ENCODE measurements at regions of chr1 and their contacts with region 1.

Region 1: DNA sequence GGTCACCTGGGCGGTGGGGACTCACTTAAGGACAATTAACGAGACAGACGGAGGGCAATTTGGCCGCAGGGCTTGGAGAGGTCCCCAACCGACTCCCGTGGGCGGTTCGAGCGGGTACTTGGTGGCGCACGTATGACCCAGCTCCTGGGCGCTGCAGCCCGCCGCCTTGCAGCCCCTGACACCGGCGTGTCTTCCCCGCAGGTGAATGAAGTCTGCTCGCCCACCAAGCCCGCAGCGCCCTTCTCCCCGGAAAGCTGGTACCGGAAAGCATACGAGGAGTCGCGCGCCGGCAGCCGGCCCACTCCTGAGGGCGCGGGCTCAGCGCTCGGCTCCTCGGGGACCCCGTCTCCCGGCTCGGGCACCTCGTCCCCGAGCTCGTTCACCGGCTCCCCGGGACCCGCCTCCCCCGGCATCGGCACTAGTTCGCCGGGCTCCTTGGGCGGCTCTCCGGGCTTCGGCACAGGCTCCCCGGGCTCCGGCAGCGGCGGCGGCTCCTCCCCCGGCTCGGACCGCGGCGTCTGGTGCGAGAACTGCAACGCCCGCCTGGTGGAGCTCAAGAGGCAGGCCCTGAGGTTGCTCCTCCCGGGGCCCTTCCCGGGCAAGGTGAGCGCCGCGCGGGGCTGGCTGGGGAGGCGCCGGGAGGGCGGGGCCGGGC is 1.4 kb downstream of the KIF26B start:
- DNase-seq: peak; percentile 84
- ATAC-seq: peak; percentile 89
- H3K4me3 ChIP-seq: peak overlapping the region in 4 of 5 experiments; percentile 34 to 66 (median 57)
- H3K4me3 Mint-ChIP-seq: peak overlapping the region; percentile 89
- H3K27ac ChIP-seq: no peak overlapping the region
- H3K27ac Mint-ChIP-seq: no peak overlapping the region
- H3K4me1 ChIP-seq: peaks cover 33 to 35% of the 10 kb centered on the region in 2 donors
- H3K4me1 Mint-ChIP-seq: peaks cover 28% of the 10 kb centered on the region
- H3K27me3 ChIP-seq: peaks cover 0 to 71% (median 47%) of the 10 kb centered on the region in 4 experiments
- H3K27me3 Mint-ChIP-seq: peaks cover 64% of the 10 kb centered on the region
- CTCF ChIP-seq: peak; percentile 76

Region 2: DNA sequence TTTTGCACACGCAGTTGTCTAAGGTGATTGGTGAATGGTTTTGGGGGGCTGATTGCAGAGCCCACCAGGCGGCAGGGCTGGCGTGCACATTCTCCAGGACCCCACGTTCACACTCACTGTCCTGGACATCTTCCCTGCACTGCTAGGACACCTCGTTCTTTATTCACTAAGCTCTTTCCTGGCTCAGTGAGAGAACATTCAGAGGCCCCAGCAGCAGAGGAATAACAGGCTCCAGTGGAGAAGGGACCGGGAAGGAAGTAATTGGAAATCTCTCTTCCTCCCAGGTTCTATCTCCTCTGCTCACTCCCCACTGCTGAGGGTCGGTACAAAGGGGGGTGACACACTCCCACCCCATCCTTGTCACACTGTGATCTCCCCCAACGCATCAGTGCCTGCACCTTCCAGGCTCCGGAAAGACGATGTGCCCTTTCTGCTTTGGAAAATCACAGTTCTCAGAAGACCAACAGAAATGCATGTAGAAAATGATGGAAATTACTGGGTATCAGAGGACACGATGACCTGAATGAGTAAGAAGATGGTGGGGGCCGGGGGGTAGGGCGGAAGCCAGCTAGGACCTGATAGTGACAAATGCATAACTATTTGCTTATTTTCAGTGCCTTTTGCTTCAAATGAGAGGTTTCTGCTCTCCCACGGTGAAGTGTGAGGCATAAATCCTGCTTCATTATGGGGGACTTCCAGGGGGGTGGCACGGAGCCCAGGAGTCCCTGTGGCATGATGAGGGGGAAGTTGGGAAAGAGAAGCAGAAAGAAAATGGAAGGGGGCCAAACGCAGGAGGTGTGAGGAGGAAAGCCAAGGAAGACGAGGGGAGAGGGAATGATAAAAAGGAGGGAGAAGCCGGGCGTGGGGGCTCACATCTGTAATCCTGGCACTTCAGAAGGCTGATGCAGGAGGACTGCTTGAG is 26.6 kb before region 1 on chr1:
- CTCF ChIA-PET with region 1: no interaction called
- POLR2A ChIA-PET with region 1: no interaction called
- intact Hi-C with region 1: no loop called
- DNase-seq: no peak
- ATAC-seq: no peak
- H3K4me3 ChIP-seq: no peak overlapping the region
- H3K4me3 Mint-ChIP-seq: no peak overlapping the region
- H3K27ac ChIP-seq: no peak overlapping the region
- H3K27ac Mint-ChIP-seq: no peak overlapping the region
- H3K4me1 ChIP-seq: no peaks in the 10 kb centered on the region
- H3K4me1 Mint-ChIP-seq: no peaks in the 10 kb centered on the region
- H3K27me3 ChIP-seq: peaks cover 0 to 3% (median 0%) of the 10 kb centered on the region in 4 experiments
- H3K27me3 Mint-ChIP-seq: peaks cover 45% of the 10 kb centered on the region
- CTCF ChIP-seq: no peak

Region 3: GRCh38 chr1:245166471-245166885 is 10.3 kb after region 1 on chr1:
- CTCF ChIA-PET with region 1: interaction called, 12 read pairs
- POLR2A ChIA-PET with region 1: no interaction called
- intact Hi-C with region 1: no loop called
- DNase-seq: no peak
- ATAC-seq: no peak
- H3K4me3 ChIP-seq: no peak overlapping the region
- H3K4me3 Mint-ChIP-seq: no peak overlapping the region
- H3K27ac ChIP-seq: no peak overlapping the region
- H3K27ac Mint-ChIP-seq: no peak overlapping the region
- H3K4me1 ChIP-seq: no peaks in the 10 kb centered on the region
- H3K4me1 Mint-ChIP-seq: peaks cover 3% of the 10 kb centered on the region
- H3K27me3 ChIP-seq: peaks cover 0 to 33% (median 13%) of the 10 kb centered on the region in 4 experiments
- H3K27me3 Mint-ChIP-seq: peaks cover 61% of the 10 kb centered on the region
- CTCF ChIP-seq: no peak

Region 4: GRCh38 chr1:246012341-246012740 is 856.1 kb after region 1 on chr1:
- CTCF ChIA-PET with region 1: interaction called, 148 read pairs
- POLR2A ChIA-PET with region 1: no interaction called
- intact Hi-C with region 1: no loop called
- DNase-seq: peak; percentile 16
- ATAC-seq: no peak
- H3K4me3 ChIP-seq: no peak overlapping the region
- H3K4me3 Mint-ChIP-seq: no peak overlapping the region
- H3K27ac ChIP-seq: no peak overlapping the region
- H3K27ac Mint-ChIP-seq: no peak overlapping the region
- H3K4me1 ChIP-seq: no peaks in the 10 kb centered on the region
- H3K4me1 Mint-ChIP-seq: no peaks in the 10 kb centered on the region
- H3K27me3 ChIP-seq: no peaks in the 10 kb centered on the region
- H3K27me3 Mint-ChIP-seq: no peaks in the 10 kb centered on the region
- CTCF ChIP-seq: peak; percentile 50

Region 5: GRCh38 chr1:246450611-246451251 is 1294.5 kb after region 1 on chr1:
- CTCF ChIA-PET with region 1: interaction called, 9 read pairs
- POLR2A ChIA-PET with region 1: no interaction called
- intact Hi-C with region 1: loop called (anchors 1 kb)
- DNase-seq: peak; percentile 32
- ATAC-seq: no peak
- H3K4me3 ChIP-seq: no peak overlapping the region
- H3K4me3 Mint-ChIP-seq: no peak overlapping the region
- H3K27ac ChIP-seq: no peak overlapping the region
- H3K27ac Mint-ChIP-seq: no peak overlapping the region
- H3K4me1 ChIP-seq: no peaks in the 10 kb centered on the region
- H3K4me1 Mint-ChIP-seq: no peaks in the 10 kb centered on the region
- H3K27me3 ChIP-seq: no peaks in the 10 kb centered on the region
- H3K27me3 Mint-ChIP-seq: no peaks in the 10 kb centered on the region
- CTCF ChIP-seq: peak; percentile 76

Region 6: GRCh38 chr1:246699095-246699735 is 1543.0 kb after region 1 on chr1:
- CTCF ChIA-PET with region 1: interaction called, 5 read pairs
- POLR2A ChIA-PET with region 1: no interaction called
- intact Hi-C with region 1: loop called (anchors 5 kb)
- DNase-seq: peak; percentile 89
- ATAC-seq: peak; percentile 88
- H3K4me3 ChIP-seq: peak overlapping the region in 3 of 5 experiments; percentile 31 to 55 (median 52)
- H3K4me3 Mint-ChIP-seq: peak overlapping the region; percentile 26
- H3K27ac ChIP-seq: peak overlapping the region in 1 of 2 donors; percentile 50
- H3K27ac Mint-ChIP-seq: peak overlapping the region; percentile 1
- H3K4me1 ChIP-seq: peaks cover 6 to 15% of the 10 kb centered on the region in 2 donors
- H3K4me1 Mint-ChIP-seq: peaks cover 7% of the 10 kb centered on the region
- H3K27me3 ChIP-seq: no peaks in the 10 kb centered on the region
- H3K27me3 Mint-ChIP-seq: no peaks in the 10 kb centered on the region
- CTCF ChIP-seq: peak; percentile 80